Right ventricle myocardium inferior (tissue), 1 donor: ENCODE measurements at regions of chr17 and their contacts with region 1.

Region 1: GRCh38 chr17:574061-574460 is 140.6 kb downstream of the VPS53 start:
- DNase-seq: no peak
- ATAC-seq: peak; percentile 46

Region 2: GRCh38 chr17:559551-560431 is 14.3 kb before region 1 on chr17:
- intact Hi-C with region 1: no loop called
- DNase-seq: peak; percentile 56
- ATAC-seq: peak; percentile 94

Region 3: GRCh38 chr17:628089-628941 is 54.3 kb after region 1 on chr17:
- intact Hi-C with region 1: loop called (anchors 5 kb)
- DNase-seq: no peak
- ATAC-seq: no peak